CD8-positive, alpha-beta T cell (primary cell): ENCODE measurements at regions of chr18 and their contacts with region 1.

Region 1: DNA sequence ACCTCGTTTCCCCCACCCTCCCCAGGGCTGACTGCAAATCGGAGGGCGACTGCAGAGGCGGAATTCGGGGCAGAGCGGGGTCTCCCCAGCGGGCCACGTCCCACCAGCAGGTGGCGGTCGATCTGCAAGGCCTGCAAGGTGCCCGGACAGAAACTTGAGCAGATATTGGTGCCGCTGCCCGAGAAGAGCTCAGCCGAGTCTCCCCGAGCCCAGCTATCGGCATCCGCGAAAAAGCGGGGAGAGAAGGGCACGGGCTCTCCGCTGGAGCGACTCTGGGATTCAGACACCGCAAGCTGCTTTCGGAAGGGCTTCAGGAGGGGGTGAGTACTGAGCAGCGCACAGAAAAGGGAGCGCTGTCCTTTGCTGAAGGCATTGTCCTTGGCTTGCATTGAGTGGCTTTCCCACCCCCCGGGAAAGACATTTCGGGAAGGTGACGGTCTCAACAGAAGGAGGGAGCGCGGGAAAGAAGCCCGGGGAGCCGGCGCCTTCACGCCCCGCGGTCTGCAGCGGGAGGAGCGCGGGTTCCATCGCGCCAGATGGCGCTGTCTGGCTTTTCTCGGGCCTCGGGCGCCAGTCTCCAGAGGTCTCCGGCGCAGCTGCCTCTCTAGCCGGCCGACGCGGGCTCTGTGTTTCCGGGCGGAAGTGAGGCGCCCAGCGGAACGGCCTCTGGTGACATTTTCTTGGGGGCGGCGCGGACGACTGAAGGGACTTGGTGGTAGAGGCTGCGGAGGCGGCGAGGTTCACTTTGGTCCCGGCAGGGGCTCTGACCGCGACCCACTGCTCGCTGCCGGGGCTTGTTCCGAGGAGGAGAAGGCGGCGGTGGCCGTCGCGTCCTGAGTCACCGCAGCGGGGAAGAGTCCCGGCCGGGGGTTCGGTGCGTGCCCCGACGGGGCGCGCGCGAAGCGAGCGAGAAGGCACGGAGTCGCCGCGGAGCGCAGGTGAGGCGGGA is 69.5 kb downstream of the HAUS1 start:
- DNase-seq: peak; percentile 89 to 95 (median 95)
- ATAC-seq: peak; percentile 88
- H3K4me3 ChIP-seq: peak overlapping the region; percentile 85 to 100
- H3K4me3 Mint-ChIP-seq: peak overlapping the region; percentile 99
- H3K27ac ChIP-seq: peak overlapping the region; percentile 80 to 83
- H3K27ac Mint-ChIP-seq: peak overlapping the region; percentile 97
- H3K4me1 ChIP-seq: peaks cover 34% of the 10 kb centered on the region
- H3K4me1 Mint-ChIP-seq: peaks cover 38% of the 10 kb centered on the region
- H3K27me3 ChIP-seq: no peaks in the 10 kb centered on the region
- H3K27me3 Mint-ChIP-seq: no peaks in the 10 kb centered on the region
- CTCF ChIP-seq: peak; percentile 99

Region 2: GRCh38 chr18:46104128-46104911 is 69.3 kb before region 1 on chr18 and contains the start of gene HAUS1:
- CTCF ChIA-PET with region 1: interaction called, 4 read pairs
- POLR2A ChIA-PET with region 1: interaction called, 5 read pairs
- intact Hi-C with region 1: loop called (anchors 2 kb)
- DNase-seq: peak; percentile 42 to 88 (median 81)
- ATAC-seq: peak; percentile 95
- H3K4me3 ChIP-seq: peak within 1 kb of the TSS; percentile 87 to 90
- H3K4me3 Mint-ChIP-seq: peak within 1 kb of the TSS; percentile 96
- H3K27ac ChIP-seq: peak within 1 kb of the TSS; percentile 42 to 52
- H3K27ac Mint-ChIP-seq: peak within 1 kb of the TSS; percentile 88
- H3K4me1 ChIP-seq: peaks cover 12% of the 10 kb centered on the region
- H3K4me1 Mint-ChIP-seq: peaks cover 31% of the 10 kb centered on the region
- H3K27me3 ChIP-seq: no peaks in the 10 kb centered on the region
- H3K27me3 Mint-ChIP-seq: no peaks in the 10 kb centered on the region
- CTCF ChIP-seq: no peak
- total RNA-seq, gene HAUS1: 6.3 to 8.8 TPM

Region 3: DNA sequence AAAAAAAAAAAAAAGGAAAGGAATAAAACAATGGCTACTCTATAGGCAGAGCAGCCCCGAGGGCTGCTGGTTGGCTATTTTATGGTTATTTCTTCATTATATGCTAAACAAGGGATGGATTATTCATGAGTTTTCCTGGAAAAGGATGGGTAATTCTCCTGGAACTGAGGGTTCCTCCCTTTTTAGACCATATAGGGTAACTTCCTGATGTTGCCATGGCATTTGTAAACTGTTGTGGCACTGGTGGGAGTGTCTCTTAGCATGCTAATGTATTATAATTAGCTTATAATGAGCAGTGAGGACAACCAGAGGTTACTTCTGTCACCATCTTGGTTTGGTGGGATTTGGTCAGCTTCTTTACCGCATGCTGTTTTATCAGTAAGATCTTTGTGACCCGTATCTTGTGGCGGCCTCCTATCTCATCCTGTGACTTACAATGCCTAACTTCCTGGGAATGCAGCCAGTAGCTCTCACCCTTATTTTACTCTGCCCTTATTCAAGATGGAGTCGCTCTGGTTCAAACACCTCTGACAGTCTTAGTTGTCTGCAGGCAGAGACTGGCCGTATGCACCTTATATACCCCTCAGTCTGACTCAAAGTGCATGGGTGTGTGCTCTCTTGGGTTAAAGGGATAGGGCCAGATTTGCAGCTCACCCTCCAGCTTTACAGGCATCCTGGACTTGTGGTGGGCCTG is 11.8 kb before region 1 on chr18:
- CTCF ChIA-PET with region 1: interaction called, 39 read pairs
- POLR2A ChIA-PET with region 1: interaction called, 7 read pairs
- intact Hi-C with region 1: loop called in 1 of 2 experiments (anchors 2 kb)
- DNase-seq: no peak
- ATAC-seq: no peak
- H3K4me3 ChIP-seq: no peak overlapping the region
- H3K4me3 Mint-ChIP-seq: no peak overlapping the region
- H3K27ac ChIP-seq: no peak overlapping the region
- H3K27ac Mint-ChIP-seq: no peak overlapping the region
- H3K4me1 ChIP-seq: peaks cover 28% of the 10 kb centered on the region
- H3K4me1 Mint-ChIP-seq: peaks cover 45% of the 10 kb centered on the region
- H3K27me3 ChIP-seq: no peaks in the 10 kb centered on the region
- H3K27me3 Mint-ChIP-seq: no peaks in the 10 kb centered on the region
- CTCF ChIP-seq: no peak

Region 4: GRCh38 chr18:46213295-46213694 is 39.6 kb after region 1 on chr18:
- CTCF ChIA-PET with region 1: interaction called, 34 read pairs
- POLR2A ChIA-PET with region 1: interaction called, 9 read pairs
- intact Hi-C with region 1: loop called (anchors 1 kb)
- DNase-seq: peak in 2 of 9 experiments; percentile 44 to 62
- ATAC-seq: peak; percentile 63
- H3K4me3 ChIP-seq: no peak overlapping the region
- H3K4me3 Mint-ChIP-seq: peak overlapping the region; percentile 30
- H3K27ac ChIP-seq: no peak overlapping the region
- H3K27ac Mint-ChIP-seq: no peak overlapping the region
- H3K4me1 ChIP-seq: peaks cover 53% of the 10 kb centered on the region
- H3K4me1 Mint-ChIP-seq: peaks cover 82% of the 10 kb centered on the region
- H3K27me3 ChIP-seq: no peaks in the 10 kb centered on the region
- H3K27me3 Mint-ChIP-seq: no peaks in the 10 kb centered on the region
- CTCF ChIP-seq: peak; percentile 85

Region 5: GRCh38 chr18:46250084-46250811 is 76.6 kb after region 1 on chr18:
- CTCF ChIA-PET with region 1: interaction called, 11 read pairs
- POLR2A ChIA-PET with region 1: interaction called, 8 read pairs
- intact Hi-C with region 1: loop called (anchors 1 to 2 kb)
- DNase-seq: peak in 7 of 9 experiments; percentile 16 to 93 (median 51)
- ATAC-seq: peak; percentile 93
- H3K4me3 ChIP-seq: peak overlapping the region; percentile 30 to 44
- H3K4me3 Mint-ChIP-seq: peak overlapping the region; percentile 86
- H3K27ac ChIP-seq: peak overlapping the region; percentile 25 to 99
- H3K27ac Mint-ChIP-seq: peak overlapping the region; percentile 98
- H3K4me1 ChIP-seq: peaks cover 44% of the 10 kb centered on the region
- H3K4me1 Mint-ChIP-seq: peaks cover 50% of the 10 kb centered on the region
- H3K27me3 ChIP-seq: no peaks in the 10 kb centered on the region
- H3K27me3 Mint-ChIP-seq: no peaks in the 10 kb centered on the region
- CTCF ChIP-seq: no peak

Region 6: DNA sequence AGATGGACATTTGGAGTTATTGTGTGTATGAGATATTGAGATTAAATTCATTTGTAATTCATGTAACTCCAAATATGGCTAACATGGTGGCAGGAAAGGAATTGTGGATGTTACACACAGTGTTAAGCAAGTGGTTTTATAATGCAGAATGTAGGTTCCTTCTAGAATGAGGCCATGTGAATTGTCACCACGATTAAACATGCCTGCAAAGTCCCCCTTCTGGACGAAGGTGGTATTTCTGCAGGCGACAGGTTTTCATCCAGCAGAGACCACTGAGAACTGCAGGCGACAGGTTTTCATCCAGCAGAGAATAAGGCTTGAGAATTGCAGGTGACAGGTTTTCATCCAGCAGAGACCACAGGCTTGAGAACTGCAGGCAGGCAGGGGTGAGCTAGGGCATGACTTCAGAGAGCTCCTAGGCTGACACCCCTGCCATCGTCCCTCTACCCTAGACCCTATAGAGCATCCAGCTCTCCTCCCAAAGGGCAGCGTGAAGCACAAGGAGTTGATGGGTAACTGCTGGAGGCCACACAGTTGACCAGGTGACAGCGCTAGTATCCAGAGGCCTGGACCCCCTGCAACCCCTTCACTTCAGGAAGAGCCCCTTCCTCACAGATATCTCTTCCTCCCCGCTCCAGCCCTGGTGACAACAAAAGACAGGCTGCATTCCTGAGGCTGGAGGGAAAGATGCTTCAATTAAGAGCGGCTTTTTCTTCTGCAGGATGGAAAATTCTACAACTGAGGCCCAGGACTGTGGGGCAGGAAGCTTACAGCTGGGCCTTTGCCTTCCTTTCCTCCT is 307.6 kb after region 1 on chr18:
- CTCF ChIA-PET with region 1: interaction called, 9 read pairs
- POLR2A ChIA-PET with region 1: no interaction called
- intact Hi-C with region 1: loop called (anchors 1 kb)
- DNase-seq: peak; percentile 8 to 69 (median 56)
- ATAC-seq: peak; percentile 64
- H3K4me3 ChIP-seq: no peak overlapping the region
- H3K4me3 Mint-ChIP-seq: no peak overlapping the region
- H3K27ac ChIP-seq: no peak overlapping the region
- H3K27ac Mint-ChIP-seq: no peak overlapping the region
- H3K4me1 ChIP-seq: no peaks in the 10 kb centered on the region
- H3K4me1 Mint-ChIP-seq: no peaks in the 10 kb centered on the region
- H3K27me3 ChIP-seq: no peaks in the 10 kb centered on the region
- H3K27me3 Mint-ChIP-seq: peaks cover 13% of the 10 kb centered on the region
- CTCF ChIP-seq: peak; percentile 68

Region 7: DNA sequence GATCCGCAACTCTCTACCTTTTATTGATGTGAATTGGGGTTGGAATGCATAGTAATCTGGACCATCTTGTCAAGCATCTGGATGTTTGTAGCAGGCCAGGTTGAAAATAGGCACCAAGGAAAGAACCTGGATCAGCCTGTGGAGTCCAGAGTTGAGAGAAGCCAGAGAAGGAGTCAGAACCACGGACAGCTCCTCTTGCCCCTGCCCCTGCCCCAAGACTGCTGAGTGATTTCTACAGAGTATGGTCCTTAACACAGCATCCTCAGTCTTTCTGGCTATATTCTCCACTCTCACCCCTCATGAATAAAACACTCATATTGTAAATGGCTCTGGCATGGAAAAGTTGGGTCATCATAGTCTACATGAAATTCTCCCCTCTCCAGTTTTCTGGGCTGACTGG is 328.8 kb after region 1 on chr18:
- CTCF ChIA-PET with region 1: no interaction called
- POLR2A ChIA-PET with region 1: no interaction called
- intact Hi-C with region 1: no loop called
- DNase-seq: peak in 1 of 9 experiments; percentile 15
- ATAC-seq: no peak
- H3K4me3 ChIP-seq: no peak overlapping the region
- H3K4me3 Mint-ChIP-seq: no peak overlapping the region
- H3K27ac ChIP-seq: no peak overlapping the region
- H3K27ac Mint-ChIP-seq: no peak overlapping the region
- H3K4me1 ChIP-seq: no peaks in the 10 kb centered on the region
- H3K4me1 Mint-ChIP-seq: no peaks in the 10 kb centered on the region
- H3K27me3 ChIP-seq: no peaks in the 10 kb centered on the region
- H3K27me3 Mint-ChIP-seq: peaks cover 16% of the 10 kb centered on the region
- CTCF ChIP-seq: no peak

Region 8: DNA sequence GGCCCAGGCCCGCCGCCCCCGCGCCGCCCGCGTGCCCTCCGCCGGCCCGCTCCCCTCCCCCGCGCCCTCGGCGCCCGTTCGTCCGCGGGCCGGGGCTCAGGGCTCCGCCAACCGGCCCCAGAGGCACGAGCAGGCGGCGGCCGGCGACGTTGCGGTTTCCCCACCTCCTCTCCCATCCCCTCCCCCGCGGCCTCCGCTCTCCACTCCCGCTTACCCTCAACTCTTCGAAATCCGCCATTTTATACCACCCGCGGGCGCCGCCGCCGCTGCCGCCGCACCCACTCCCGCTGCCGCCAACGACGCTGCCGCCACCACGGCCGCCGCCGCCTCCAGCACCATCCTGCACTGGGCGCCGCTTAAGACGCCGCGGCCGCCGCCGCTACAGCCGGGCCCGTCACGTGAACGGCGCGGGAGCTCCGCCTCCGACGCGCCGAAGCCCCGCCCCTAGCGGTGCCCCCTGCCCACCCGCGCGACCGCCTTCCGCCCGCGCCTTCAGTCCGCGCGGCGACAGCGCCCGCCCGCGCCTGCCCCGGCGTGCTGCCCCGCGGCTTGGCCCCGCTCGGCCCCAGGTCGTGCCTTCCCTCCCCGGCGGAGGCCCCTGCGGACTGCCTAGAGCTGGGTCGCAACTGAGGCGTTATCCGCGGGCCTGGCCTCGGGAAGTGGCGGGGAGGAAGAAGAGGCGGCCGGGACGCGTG is 743.6 kb after region 1 on chr18 and contains the starts of genes KATNAL2 and PIAS2:
- CTCF ChIA-PET with region 1: no interaction called
- POLR2A ChIA-PET with region 1: interaction called, 4 read pairs
- intact Hi-C with region 1: loop called (anchors 5 kb)
- DNase-seq: peak; percentile 38 to 88 (median 69)
- ATAC-seq: peak; percentile 82
- H3K4me3 ChIP-seq: peak within 1 kb of the TSS; percentile 56 to 79
- H3K4me3 Mint-ChIP-seq: peak within 1 kb of the TSS; percentile 90
- H3K27ac ChIP-seq: peak within 1 kb of the TSS; percentile 55 to 75
- H3K27ac Mint-ChIP-seq: peak within 1 kb of the TSS; percentile 91
- H3K4me1 ChIP-seq: peaks cover 12% of the 10 kb centered on the region
- H3K4me1 Mint-ChIP-seq: peaks cover 55% of the 10 kb centered on the region
- H3K27me3 ChIP-seq: no peaks in the 10 kb centered on the region
- H3K27me3 Mint-ChIP-seq: no peaks in the 10 kb centered on the region
- CTCF ChIP-seq: no peak
- total RNA-seq, gene KATNAL2: 1.0 to 2.1 TPM
- total RNA-seq, gene PIAS2: 38.4 to 40.2 TPM